Activated CD4-positive, alpha-beta T cell treated with anti-CD3 and anti-CD28 coated beads, Interleukin-2, amount 10 ng/mL, durations not matched to agents 24 days and 14 days (primary cell): ENCODE measurements at regions of chr18 and their contacts with region 1.

Region 1: DNA sequence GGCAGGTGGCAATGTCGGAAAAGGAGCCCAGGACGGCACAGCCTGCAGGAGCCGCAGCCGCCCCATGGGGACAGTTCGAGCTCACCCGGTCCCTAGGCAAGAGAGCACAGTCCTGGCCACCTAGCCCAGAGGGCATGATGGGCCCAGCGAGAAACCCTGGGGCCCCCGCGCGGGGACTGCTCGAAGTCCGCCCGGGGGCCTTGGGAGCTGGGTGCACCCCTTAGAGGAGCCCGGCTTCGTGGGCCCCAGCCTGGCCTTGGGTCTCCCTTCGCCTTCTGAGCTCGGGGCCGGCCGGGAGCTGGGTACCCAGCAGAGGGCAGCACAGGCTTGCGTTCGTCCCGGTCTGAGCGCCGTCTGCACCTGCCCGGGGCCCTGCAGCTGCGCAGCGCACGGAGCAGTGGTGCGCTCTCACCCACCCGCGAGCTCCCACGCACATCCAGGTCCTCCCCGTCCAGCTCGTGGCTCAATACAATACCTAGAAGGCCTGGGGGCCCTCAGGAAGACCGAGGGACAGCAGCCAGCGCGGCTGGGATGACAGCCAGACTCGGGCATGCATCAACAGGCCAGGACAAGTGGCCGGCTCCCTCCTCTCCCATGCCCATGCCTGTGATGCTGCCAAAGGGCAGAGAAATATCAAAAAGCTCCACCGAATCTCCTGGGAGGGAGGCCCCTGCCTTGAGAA is 96.2 kb upstream of the ZNF532 start:
- DNase-seq: peak; percentile 90
- H3K4me3 Mint-ChIP-seq: peak overlapping the region; percentile 49
- H3K27ac Mint-ChIP-seq: no peak overlapping the region
- H3K4me1 Mint-ChIP-seq: peaks cover 12% of the 10 kb centered on the region
- H3K27me3 Mint-ChIP-seq: peaks cover 60% of the 10 kb centered on the region

Region 2: DNA sequence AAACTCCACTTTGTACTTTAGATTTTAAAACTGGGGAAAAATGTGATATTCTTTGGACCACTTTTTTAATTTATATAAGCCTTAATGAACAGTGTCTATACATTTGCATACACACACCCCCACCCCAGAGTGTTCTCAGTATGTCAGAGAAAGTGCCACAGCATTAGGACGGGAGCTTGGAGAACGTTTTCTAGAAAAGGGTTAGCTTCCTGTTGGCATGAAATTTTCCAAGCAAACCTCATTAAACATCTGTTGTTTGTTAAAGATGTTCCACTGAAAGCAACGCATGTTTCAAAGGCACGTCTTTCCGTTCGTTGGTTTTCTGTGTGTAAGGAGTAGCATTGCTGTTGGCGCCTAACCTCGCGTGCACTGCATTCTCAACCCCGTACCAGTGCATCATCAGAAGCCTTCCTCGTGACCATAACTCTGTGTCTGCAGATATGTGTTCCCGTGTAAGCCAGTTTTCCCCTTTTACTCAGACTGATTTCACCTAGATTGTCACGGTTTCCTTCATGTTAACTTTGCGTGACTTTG is 368.0 kb before region 1 on chr18:
- intact Hi-C with region 1: loop called (anchors 1 kb)
- DNase-seq: peak; percentile 67
- H3K4me3 Mint-ChIP-seq: peak overlapping the region; percentile 2
- H3K27ac Mint-ChIP-seq: no peak overlapping the region
- H3K4me1 Mint-ChIP-seq: peaks cover 8% of the 10 kb centered on the region
- H3K27me3 Mint-ChIP-seq: no peaks in the 10 kb centered on the region

Region 3: GRCh38 chr18:58493516-58494253 is 274.7 kb before region 1 on chr18:
- intact Hi-C with region 1: loop called (anchors 1 kb)
- DNase-seq: peak; percentile 91
- H3K4me3 Mint-ChIP-seq: no peak overlapping the region
- H3K27ac Mint-ChIP-seq: no peak overlapping the region
- H3K4me1 Mint-ChIP-seq: peaks cover 3% of the 10 kb centered on the region
- H3K27me3 Mint-ChIP-seq: peaks cover 30% of the 10 kb centered on the region

Region 4: GRCh38 chr18:58529714-58530354 is 238.6 kb before region 1 on chr18:
- intact Hi-C with region 1: loop called (anchors 1 kb)
- DNase-seq: peak; percentile 88
- H3K4me3 Mint-ChIP-seq: no peak overlapping the region
- H3K27ac Mint-ChIP-seq: peak overlapping the region; percentile 47
- H3K4me1 Mint-ChIP-seq: peaks cover 15% of the 10 kb centered on the region
- H3K27me3 Mint-ChIP-seq: peaks cover 39% of the 10 kb centered on the region

Region 5: GRCh38 chr18:58661423-58661822 is 107.0 kb before region 1 on chr18:
- intact Hi-C with region 1: no loop called
- DNase-seq: no peak
- H3K4me3 Mint-ChIP-seq: no peak overlapping the region
- H3K27ac Mint-ChIP-seq: no peak overlapping the region
- H3K4me1 Mint-ChIP-seq: peaks cover 37% of the 10 kb centered on the region
- H3K27me3 Mint-ChIP-seq: no peaks in the 10 kb centered on the region

Region 6: GRCh38 chr18:58911766-58912165 is 143.3 kb after region 1 on chr18:
- intact Hi-C with region 1: no loop called
- DNase-seq: no peak
- H3K4me3 Mint-ChIP-seq: no peak overlapping the region
- H3K27ac Mint-ChIP-seq: no peak overlapping the region
- H3K4me1 Mint-ChIP-seq: no peaks in the 10 kb centered on the region
- H3K27me3 Mint-ChIP-seq: peaks cover 6% of the 10 kb centered on the region

Region 7: DNA sequence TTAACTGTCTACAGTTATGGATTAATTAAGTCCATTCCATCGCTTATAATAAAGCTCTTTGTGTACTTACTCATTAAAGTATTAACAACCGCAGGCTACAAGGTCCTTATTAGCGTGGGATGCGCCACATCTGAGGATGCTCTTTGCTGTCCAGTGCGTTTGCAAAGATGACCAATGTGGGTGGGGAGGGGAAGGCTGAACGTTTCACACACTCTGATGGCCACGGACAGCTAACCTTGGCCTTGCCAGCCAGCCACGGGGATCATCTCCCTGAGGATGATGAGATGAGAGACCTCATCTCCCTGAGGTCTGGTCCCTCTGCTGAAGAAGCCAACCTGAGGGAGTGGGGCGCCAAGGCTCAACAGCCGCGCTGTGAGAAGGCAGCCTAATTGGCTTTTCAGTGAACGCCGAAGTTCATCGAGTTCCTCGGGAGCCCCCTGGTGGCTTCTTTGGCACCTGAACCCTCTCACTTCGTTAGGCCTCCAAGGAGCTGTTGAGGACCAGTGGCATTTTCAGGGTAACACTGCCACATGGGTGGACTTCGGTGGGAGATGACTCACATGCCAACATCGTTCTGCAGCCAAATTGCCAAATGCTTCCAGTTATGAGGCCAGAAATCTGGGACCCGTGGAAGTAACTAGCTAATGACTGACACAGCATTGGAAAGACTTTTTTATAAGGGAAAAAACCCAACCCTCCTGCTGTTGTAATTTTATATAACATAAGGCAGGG is 301.9 kb after region 1 on chr18:
- intact Hi-C with region 1: loop called (anchors 1 kb)
- DNase-seq: peak; percentile 91
- H3K4me3 Mint-ChIP-seq: no peak overlapping the region
- H3K27ac Mint-ChIP-seq: no peak overlapping the region
- H3K4me1 Mint-ChIP-seq: no peaks in the 10 kb centered on the region
- H3K27me3 Mint-ChIP-seq: peaks cover 7% of the 10 kb centered on the region